ENCODE measurements at regions of chr12 and their contacts with region 1.

Region 1: DNA sequence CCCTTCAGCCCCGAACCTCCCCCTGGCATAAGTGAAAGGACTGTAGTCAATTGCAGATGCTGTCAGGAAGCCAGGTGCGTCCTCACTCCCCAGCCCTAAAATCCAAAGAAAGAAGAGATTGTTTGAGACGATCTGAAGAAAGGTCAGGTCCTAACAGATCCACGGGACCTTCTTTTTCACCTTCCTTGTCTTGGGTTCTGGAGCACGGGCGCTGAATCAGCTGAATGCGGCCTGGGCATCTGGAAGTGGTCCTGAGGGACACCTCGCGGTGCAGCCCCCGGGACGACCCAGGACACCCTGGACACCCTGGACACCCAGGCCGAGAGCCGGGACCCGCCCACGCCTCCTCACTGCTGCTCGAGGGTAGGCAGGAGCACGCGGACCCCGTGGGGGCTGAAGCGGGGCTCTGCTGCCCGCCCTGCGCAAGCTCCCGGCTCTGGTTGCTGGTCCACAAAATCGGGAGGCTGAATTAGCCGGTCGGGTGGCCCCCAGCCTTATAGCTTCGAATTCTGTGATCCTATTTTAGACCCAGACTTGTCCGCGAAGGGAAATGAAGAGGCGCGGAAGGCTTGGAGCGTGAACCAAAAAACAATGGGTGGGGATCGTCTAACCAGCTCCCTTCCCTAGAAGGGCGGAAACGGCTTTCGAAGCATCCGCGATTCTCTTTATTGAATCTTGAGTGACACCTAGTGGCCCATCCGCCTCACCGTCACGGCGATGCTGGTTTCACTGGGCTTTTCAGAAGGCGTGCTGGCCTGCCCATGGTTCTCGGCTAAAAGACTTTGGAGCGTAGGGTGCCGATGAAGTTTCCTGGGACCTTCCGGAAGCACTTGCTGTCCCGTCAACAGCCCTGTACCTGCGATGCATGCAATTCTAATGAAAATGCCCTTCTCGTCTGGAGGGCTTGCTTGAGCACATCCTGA is 46.4 kb upstream of the PLXNC1 start:
- DNase-seq: peak; percentile 64
- ATAC-seq: peak; percentile 87
- H3K4me3 Mint-ChIP-seq: peak overlapping the region; percentile 83
- H3K27ac Mint-ChIP-seq: no peak overlapping the region
- H3K4me1 Mint-ChIP-seq: peaks cover 6% of the 10 kb centered on the region
- H3K27me3 Mint-ChIP-seq: peaks cover 54% of the 10 kb centered on the region
- CTCF ChIP-seq: peak; percentile 34

Region 2: GRCh38 chr12:92784795-92785562 is 1317.0 kb before region 1 on chr12:
- CTCF ChIA-PET with region 1: interaction called, 34 read pairs
- POLR2A ChIA-PET with region 1: no interaction called
- intact Hi-C with region 1: loop called (anchors 1 kb)
- DNase-seq: no peak
- ATAC-seq: peak; percentile 98
- H3K4me3 Mint-ChIP-seq: no peak overlapping the region
- H3K27ac Mint-ChIP-seq: no peak overlapping the region
- H3K4me1 Mint-ChIP-seq: no peaks in the 10 kb centered on the region
- H3K27me3 Mint-ChIP-seq: no peaks in the 10 kb centered on the region
- CTCF ChIP-seq: no peak

Region 3: DNA sequence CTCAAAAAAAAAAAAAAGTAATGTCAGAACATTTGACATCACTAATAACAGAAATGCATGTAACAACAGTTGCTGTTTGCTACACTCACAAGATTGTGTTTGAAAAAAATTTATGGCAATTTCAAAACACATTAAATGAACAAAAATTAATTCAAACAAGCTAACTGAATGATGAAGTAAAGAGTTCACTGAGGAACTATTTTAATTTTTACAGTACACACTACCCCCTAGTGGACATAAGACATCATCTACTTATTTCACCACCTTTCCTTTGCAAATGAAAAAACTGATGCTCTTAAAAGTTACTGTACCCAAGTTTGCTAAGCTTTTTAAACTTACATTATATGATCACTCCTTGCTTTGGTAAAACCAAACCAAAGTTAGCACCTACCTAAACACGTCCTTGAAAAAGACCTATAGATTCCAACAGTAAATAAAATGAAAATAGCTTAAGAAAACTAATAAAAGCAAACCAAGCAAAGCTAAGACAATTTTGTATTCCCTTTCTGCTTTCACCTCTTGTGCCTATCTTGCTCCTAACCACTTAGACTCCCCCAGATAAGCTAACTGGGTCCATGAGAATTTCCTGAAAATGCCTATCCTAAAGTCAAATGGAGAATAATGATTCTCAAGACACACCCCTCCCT is 682.5 kb before region 1 on chr12:
- CTCF ChIA-PET with region 1: interaction called, 20 read pairs
- POLR2A ChIA-PET with region 1: no interaction called
- intact Hi-C with region 1: loop called (anchors 5 kb)
- DNase-seq: no peak
- ATAC-seq: peak; percentile 56
- H3K4me3 Mint-ChIP-seq: no peak overlapping the region
- H3K27ac Mint-ChIP-seq: peak overlapping the region; percentile 31
- H3K4me1 Mint-ChIP-seq: peaks cover 87% of the 10 kb centered on the region
- H3K27me3 Mint-ChIP-seq: no peaks in the 10 kb centered on the region
- CTCF ChIP-seq: peak; percentile 68

Region 4: DNA sequence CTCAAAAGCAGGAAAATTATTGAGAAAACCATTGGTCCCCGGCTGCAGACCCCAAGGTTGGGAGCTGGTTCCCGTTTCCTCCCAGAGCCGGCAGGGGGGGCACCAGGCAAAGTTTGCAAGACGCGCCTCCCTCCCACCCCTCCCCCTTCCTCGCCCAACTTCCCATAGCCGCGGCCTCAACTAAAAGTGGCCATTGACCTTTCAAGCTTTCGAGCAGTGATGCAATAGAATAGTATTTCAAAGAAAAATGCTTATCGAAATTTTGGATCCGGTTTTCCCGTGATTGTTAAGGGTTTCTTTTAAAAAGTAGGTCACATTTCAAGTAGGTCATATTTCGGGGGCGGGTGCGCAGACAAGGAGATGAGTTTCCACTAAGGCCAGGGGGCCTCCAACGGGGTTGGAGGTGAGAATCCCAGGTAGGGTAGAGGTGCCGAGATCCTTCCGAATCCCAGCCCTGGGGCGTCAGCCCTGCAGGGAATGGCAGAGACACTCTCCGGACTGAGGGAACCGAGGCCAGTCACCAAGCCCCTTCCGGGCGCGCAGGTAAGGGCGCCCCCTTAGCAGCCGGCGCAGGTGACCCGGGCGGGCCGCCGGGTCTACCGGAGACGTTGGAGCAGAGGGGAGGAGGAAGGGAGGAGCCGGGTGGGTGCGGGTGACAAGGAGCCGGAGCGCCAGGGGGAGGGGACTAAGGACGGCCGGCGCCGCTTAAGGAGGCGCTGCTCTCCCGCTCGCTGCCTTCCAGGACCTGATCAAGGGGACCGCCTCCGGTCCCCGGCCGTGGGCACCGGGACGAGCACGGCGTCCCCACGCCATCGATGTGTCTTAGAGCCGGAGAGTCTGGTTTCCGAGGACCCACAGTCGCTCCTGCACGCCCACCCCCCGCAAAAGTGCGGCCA is 532.1 kb before region 1 on chr12:
- CTCF ChIA-PET with region 1: interaction called, 135 read pairs
- POLR2A ChIA-PET with region 1: interaction called, 12 read pairs
- intact Hi-C with region 1: loop called (anchors 1 kb)
- DNase-seq: peak; percentile 60
- ATAC-seq: peak; percentile 42
- H3K4me3 Mint-ChIP-seq: peak overlapping the region; percentile 88
- H3K27ac Mint-ChIP-seq: no peak overlapping the region
- H3K4me1 Mint-ChIP-seq: peaks cover 17% of the 10 kb centered on the region
- H3K27me3 Mint-ChIP-seq: peaks cover 26% of the 10 kb centered on the region
- CTCF ChIP-seq: no peak

Region 5: DNA sequence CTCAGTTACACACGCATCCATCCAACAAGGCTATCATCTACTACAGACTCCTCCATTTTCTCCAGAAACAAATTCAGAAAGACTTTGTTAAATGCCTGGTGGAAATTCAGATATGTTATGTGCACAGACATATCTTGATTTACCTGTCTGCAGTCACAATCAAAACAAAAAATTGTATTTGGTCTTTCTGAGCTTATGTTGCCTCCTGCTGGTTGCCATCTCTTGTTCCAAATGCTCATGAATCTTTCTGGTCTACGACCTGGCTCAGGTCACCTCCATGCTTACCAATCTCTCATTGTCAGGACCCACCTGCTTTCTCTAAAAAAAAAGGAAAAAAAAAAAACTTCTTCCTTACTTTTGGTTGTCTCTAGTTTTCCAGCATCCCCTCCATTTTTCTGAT is 122.8 kb before region 1 on chr12:
- CTCF ChIA-PET with region 1: interaction called, 13 read pairs
- POLR2A ChIA-PET with region 1: no interaction called
- intact Hi-C with region 1: loop called (anchors 1 kb)
- DNase-seq: no peak
- ATAC-seq: no peak
- H3K4me3 Mint-ChIP-seq: no peak overlapping the region
- H3K27ac Mint-ChIP-seq: no peak overlapping the region
- H3K4me1 Mint-ChIP-seq: no peaks in the 10 kb centered on the region
- H3K27me3 Mint-ChIP-seq: peaks cover 6% of the 10 kb centered on the region
- CTCF ChIP-seq: no peak

Region 6: DNA sequence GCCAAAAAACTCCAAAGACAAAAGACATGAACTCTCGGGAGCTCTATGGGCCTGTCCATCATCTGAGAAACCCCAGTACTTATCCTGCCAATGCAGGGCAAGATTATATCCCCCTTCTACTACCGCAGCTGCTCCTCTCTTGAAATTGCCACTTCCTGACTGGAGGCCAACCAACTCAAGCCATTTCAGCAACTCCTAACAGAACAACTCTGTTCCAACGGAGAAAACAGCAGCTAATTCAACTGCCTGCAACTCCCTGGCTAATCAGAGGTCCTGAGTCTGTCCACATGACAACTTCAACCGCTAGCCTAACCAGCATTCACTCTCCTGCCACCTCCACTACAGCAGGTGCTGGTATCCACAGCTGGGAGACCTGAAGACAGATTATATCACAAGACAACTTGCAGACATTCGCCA is 333.5 kb after region 1 on chr12:
- CTCF ChIA-PET with region 1: interaction called, 15 read pairs
- POLR2A ChIA-PET with region 1: no interaction called
- intact Hi-C with region 1: no loop called
- DNase-seq: no peak
- ATAC-seq: no peak
- H3K4me3 Mint-ChIP-seq: no peak overlapping the region
- H3K27ac Mint-ChIP-seq: no peak overlapping the region
- H3K4me1 Mint-ChIP-seq: peaks cover 12% of the 10 kb centered on the region
- H3K27me3 Mint-ChIP-seq: no peaks in the 10 kb centered on the region
- CTCF ChIP-seq: no peak

Measured in activated B cell treated with CpG ODN at 0.5 μM for 24 hours (primary cell).